ENCODE measurements at regions of chr1 and their contacts with region 1.

Region 1: DNA sequence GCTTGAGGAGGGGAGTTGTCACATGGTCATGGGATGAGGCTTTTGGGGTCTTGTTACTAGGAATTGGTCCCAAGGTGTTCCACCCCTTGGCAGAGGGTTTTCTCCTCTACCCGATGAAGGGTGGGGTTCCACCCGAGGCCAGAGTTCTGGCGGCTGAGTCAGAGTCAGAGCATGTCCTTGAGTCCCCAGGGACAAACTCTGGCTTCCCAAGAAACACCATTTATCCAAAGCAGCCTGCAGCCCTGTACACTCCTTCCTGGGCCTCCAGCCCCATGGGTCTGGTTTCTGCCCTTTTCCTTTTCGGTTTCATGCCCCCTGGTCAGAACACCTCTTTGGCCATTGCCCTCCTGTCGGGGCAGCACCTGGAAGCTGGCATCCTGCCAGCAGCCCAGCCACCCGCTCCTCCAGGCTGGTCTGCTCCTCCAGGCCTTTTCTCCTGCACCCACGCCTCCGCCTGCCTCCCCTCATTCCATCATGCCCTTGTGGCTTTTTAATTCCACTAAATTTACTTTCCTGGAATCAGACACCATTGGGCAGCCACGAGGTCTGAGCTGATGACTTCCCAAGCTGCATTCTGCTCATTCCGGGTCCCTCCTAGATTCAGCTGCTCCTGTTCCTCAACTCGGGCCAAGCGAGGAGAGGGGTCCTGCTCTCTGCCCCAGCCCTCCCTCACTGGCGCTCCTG is 301.7 kb upstream of the VAMP3 start:
- DNase-seq: no peak
- ATAC-seq: no peak
- H3K4me3 ChIP-seq: no peak overlapping the region
- H3K27ac ChIP-seq: no peak overlapping the region
- H3K4me1 ChIP-seq: peaks cover 0 to 14% (median 7%) of the 10 kb centered on the region in 12 donors
- H3K27me3 ChIP-seq: no peaks in the 10 kb centered on the region
- CTCF ChIP-seq: no peak
- POLR2A ChIP-seq: no peak

Region 2: DNA sequence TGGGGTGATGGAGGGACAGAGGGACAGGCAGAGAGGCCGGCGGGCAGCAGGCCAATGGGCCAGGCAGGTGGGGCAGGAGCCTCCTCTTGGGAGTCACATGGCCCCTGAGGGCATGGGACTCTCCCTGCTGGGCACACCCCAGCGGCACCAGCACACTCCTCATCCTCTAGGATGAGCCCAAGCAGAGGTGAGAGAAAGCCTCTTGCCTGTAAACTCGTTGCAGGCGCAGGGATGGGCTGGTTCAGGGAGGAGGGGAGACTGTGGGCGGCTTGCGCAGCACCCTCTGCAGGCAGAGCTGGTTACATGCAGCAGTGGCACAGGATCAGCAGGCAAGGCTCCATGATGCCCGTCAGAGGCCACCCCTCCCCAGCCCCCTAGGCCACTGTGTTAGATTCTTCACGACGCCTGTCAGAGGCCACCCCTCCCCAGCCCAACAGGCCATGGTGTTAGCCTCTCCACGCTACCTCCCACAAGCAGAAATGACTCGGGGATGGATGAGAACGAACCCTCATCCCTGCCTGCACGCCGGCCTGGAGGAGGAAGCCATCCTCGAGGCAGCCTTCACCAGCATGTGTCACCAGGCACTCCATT is 92.0 kb after region 1 on chr1:
- intact Hi-C with region 1: loop called in 2 of 10 experiments (anchors 5 to 10 kb)
- DNase-seq: peak in 1 of 5 donors; percentile 22
- ATAC-seq: peak in 3 of 4 donors; percentile 10 to 18 (median 16)
- H3K4me3 ChIP-seq: no peak overlapping the region
- H3K27ac ChIP-seq: no peak overlapping the region
- H3K4me1 ChIP-seq: peaks cover 0 to 11% (median 7%) of the 10 kb centered on the region in 12 donors
- H3K27me3 ChIP-seq: no peaks in the 10 kb centered on the region
- CTCF ChIP-seq: peak in 6 of 12 donors; percentile 7 to 36 (median 24)
- POLR2A ChIP-seq: no peak

Measured in heart left ventricle (tissue), 16 donors.